K562 (cell line): ENCODE measurements at regions of chr12 and their contacts with region 1.

Region 1: DNA sequence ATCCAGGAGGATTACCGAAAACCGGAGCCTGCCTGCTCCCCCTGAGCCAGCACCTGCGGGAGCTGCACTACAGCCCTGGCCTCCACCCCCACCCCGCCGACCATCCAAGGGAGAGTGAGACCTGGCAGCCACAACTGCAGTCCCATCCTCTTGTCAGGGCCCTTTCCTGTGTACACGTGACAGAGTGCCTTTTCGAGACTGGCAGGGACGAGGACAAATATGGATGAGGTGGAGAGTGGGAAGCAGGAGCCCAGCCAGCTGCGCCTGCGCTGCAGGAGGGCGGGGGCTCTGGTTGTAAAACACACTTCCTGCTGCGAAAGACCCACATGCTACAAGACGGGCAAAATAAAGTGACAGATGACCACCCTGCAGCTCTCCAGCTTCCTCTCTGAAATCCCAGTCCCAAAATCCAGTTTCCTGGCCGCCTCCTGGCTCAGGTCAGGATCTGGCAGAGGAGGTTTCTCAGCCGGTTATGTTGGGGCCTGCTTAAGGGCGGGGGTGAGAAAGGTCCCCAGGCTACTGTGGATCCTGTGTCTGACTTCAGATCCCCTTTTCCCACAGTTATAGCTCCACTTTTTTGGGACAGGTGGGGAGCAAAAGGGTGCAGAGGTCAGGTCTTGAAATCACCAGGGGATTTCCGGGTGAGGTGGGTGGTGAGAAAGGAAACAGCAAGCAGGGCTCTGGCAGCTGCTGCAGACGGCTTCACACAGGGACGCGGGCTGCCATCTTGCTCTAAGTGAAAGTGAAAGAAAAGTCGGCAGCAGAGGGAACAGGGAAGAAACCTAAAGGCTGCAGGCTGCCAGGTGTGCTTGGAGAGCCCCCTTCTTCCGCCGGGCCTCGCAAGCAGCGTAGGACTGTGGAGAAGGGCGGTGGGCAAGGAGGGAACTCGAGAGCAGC is at the start of gene TAPBPL:
- DNase-seq: peak; percentile 31 to 38 (median 36)
- ATAC-seq: peak; percentile 84
- H3K4me3 ChIP-seq: peak within 1 kb of the TSS; percentile 28
- H3K27ac ChIP-seq: peak within 1 kb of the TSS; percentile 75
- H3K4me1 ChIP-seq: peaks cover 12 to 24% of the 10 kb centered on the region in 2 experiments; a peak in 4 of 5 replicates
- H3K27me3 ChIP-seq: no peaks in the 10 kb centered on the region
- CTCF ChIP-seq: no peak
- EP300 ChIP-seq: no peak
- POLR2A ChIP-seq: peak; percentile 50
- RAD21 ChIP-seq: no peak
- polyA plus RNA-seq, gene TAPBPL: 0.29 to 0.31 TPM

Region 2: DNA sequence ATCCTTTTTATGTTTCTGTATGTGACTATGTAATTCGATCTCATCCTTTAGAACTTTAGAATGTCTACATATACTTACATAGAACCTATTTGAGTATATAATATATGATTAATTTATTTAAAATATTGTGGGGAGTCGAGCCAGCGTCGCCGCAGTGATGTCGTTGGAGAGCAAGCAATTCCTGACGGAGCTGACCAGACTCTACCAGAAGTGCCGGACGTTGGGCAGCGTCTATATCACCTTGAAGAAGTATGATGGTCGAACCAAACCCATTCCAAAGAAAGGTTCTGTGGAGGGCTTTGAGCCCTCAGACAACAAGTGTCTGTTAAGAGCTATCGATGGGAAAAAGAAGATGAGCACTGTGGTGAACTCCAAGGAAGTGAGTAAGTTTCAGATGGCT is 13.3 kb before region 1 on chr12:
- CTCF ChIA-PET with region 1: no interaction called
- POLR2A ChIA-PET with region 1: interaction called, 14 read pairs
- in situ Hi-C with region 1: no loop called
- intact Hi-C with region 1: no loop called
- DNase-seq: no peak
- ATAC-seq: no peak
- H3K4me3 ChIP-seq: no peak overlapping the region
- H3K27ac ChIP-seq: no peak overlapping the region
- H3K4me1 ChIP-seq: no peaks in the 10 kb centered on the region; a peak in 2 of 5 replicates
- H3K27me3 ChIP-seq: no peaks in the 10 kb centered on the region
- CTCF ChIP-seq: no peak
- EP300 ChIP-seq: no peak
- POLR2A ChIP-seq: no peak
- RAD21 ChIP-seq: no peak